Mammary epithelial cell (primary cell): ENCODE measurements at regions of chr18 and their contacts with region 1.

Region 1: DNA sequence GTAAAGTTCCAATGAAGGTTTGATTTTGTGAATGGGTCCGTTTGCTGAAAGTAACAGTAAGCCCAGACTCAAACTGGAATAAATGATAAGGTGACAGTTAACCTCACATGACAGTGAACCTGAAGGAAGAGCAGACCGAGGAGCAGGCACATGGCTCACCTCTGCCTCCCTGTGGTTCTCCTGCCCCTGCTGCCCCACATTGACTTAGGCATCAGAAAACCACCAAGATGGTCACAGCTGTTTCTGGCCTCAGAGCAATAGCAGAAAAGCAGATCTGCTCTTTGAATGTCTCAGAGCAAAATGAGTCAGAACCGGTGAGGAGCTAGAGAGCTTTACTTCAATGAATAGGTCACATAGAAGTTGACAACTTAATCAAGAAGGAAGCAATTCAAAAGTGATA is 487.6 kb downstream of the METTL4 start:
- DNase-seq: peak; percentile 37
- H3K4me3 ChIP-seq: no peak overlapping the region
- H3K27ac ChIP-seq: no peak overlapping the region
- H3K4me1 ChIP-seq: no peaks in the 10 kb centered on the region
- H3K27me3 ChIP-seq: no peaks in the 10 kb centered on the region
- CTCF ChIP-seq: peak; percentile 79 to 90

Region 2: GRCh38 chr18:864872-865273 is 1218.8 kb before region 1 on chr18:
- CTCF ChIA-PET with region 1: no interaction called
- dilution Hi-C with region 1: no loop called
- in situ Hi-C with region 1: loop called in 1 of 2 experiments (anchors 25 kb)
- intact Hi-C with region 1: loop called (anchors 1 kb)
- DNase-seq: peak; percentile 43
- H3K4me3 ChIP-seq: no peak overlapping the region
- H3K27ac ChIP-seq: no peak overlapping the region
- H3K4me1 ChIP-seq: peaks cover 12% of the 10 kb centered on the region
- H3K27me3 ChIP-seq: peaks cover 3% of the 10 kb centered on the region
- CTCF ChIP-seq: peak; percentile 98 to 100

Region 3: GRCh38 chr18:1585879-1586488 is 497.7 kb before region 1 on chr18:
- CTCF ChIA-PET with region 1: no interaction called
- dilution Hi-C with region 1: no loop called
- in situ Hi-C with region 1: loop called in 1 of 2 experiments (anchors 10 kb)
- intact Hi-C with region 1: loop called (anchors 1 kb)
- DNase-seq: peak; percentile 13
- H3K4me3 ChIP-seq: no peak overlapping the region
- H3K27ac ChIP-seq: no peak overlapping the region
- H3K4me1 ChIP-seq: no peaks in the 10 kb centered on the region
- H3K27me3 ChIP-seq: no peaks in the 10 kb centered on the region
- CTCF ChIP-seq: peak; percentile 25 to 58

Region 4: GRCh38 chr18:1663879-1664705 is 419.6 kb before region 1 on chr18:
- CTCF ChIA-PET with region 1: no interaction called
- dilution Hi-C with region 1: no loop called
- in situ Hi-C with region 1: no loop called
- intact Hi-C with region 1: loop called (anchors 2 kb)
- DNase-seq: peak; percentile 20
- H3K4me3 ChIP-seq: no peak overlapping the region
- H3K27ac ChIP-seq: no peak overlapping the region
- H3K4me1 ChIP-seq: no peaks in the 10 kb centered on the region
- H3K27me3 ChIP-seq: no peaks in the 10 kb centered on the region
- CTCF ChIP-seq: peak; percentile 53 to 65

Region 5: GRCh38 chr18:1751243-1751642 is 332.4 kb before region 1 on chr18:
- CTCF ChIA-PET with region 1: interaction called, 3 read pairs
- dilution Hi-C with region 1: no loop called
- in situ Hi-C with region 1: no loop called
- intact Hi-C with region 1: loop called (anchors 5 kb)
- DNase-seq: no peak
- H3K4me3 ChIP-seq: no peak overlapping the region
- H3K27ac ChIP-seq: no peak overlapping the region
- H3K4me1 ChIP-seq: no peaks in the 10 kb centered on the region
- H3K27me3 ChIP-seq: peaks cover 1% of the 10 kb centered on the region
- CTCF ChIP-seq: peak in 1 of 2 donors; percentile 8

Region 6: GRCh38 chr18:1914490-1914889 is 169.2 kb before region 1 on chr18:
- CTCF ChIA-PET with region 1: no interaction called
- dilution Hi-C with region 1: no loop called
- in situ Hi-C with region 1: loop called in 1 of 2 experiments (anchors 25 kb)
- intact Hi-C with region 1: loop called (anchors 1 kb)
- DNase-seq: peak; percentile 11
- H3K4me3 ChIP-seq: no peak overlapping the region
- H3K27ac ChIP-seq: no peak overlapping the region
- H3K4me1 ChIP-seq: no peaks in the 10 kb centered on the region
- H3K27me3 ChIP-seq: no peaks in the 10 kb centered on the region
- CTCF ChIP-seq: peak; percentile 64 to 76

Region 7: DNA sequence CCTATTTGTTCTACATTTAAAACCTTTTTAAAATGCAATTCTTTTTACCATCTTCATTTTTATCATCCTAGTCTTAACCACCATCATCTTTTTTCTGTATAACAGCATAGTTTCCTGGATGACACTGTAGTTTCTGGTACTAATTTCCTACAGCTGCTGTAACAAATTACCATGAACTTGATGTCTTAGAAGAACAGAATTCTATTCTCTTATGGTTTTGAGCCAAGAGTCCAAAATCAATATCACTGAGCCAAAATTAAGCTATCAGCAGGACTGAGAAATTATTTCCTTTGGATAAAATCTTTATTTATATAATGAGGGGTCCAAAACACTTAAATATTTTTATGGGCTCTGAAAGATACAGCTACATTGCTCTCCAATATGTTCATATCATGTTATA is 51.7 kb before region 1 on chr18:
- CTCF ChIA-PET with region 1: no interaction called
- dilution Hi-C with region 1: no loop called
- in situ Hi-C with region 1: no loop called
- intact Hi-C with region 1: loop called (anchors 5 kb)
- DNase-seq: no peak
- H3K4me3 ChIP-seq: no peak overlapping the region
- H3K27ac ChIP-seq: no peak overlapping the region
- H3K4me1 ChIP-seq: peaks cover 9% of the 10 kb centered on the region
- H3K27me3 ChIP-seq: no peaks in the 10 kb centered on the region
- CTCF ChIP-seq: no peak